ENCODE measurements at regions of chr1 and their contacts with region 1.

Region 1: GRCh38 chr1:207499573-207499972 is 3.6 kb downstream of the CR1 start:
- DNase-seq: peak; percentile 47
- H3K4me3 ChIP-seq: no peak overlapping the region
- H3K27ac ChIP-seq: no peak overlapping the region
- H3K4me1 ChIP-seq: peaks cover 7% of the 10 kb centered on the region
- H3K27me3 ChIP-seq: peaks cover 13% of the 10 kb centered on the region
- CTCF ChIP-seq: peak; percentile 70 to 81

Region 2: GRCh38 chr1:207084701-207085180 is 414.8 kb before region 1 on chr1:
- CTCF ChIA-PET with region 1: no interaction called
- dilution Hi-C with region 1: no loop called
- in situ Hi-C with region 1: loop called in 1 of 2 experiments (anchors 25 kb)
- intact Hi-C with region 1: loop called (anchors 1 kb)
- DNase-seq: peak; percentile 59
- H3K4me3 ChIP-seq: no peak overlapping the region
- H3K27ac ChIP-seq: no peak overlapping the region
- H3K4me1 ChIP-seq: peaks cover 3% of the 10 kb centered on the region
- H3K27me3 ChIP-seq: no peaks in the 10 kb centered on the region
- CTCF ChIP-seq: peak; percentile 56 to 73

Region 3: DNA sequence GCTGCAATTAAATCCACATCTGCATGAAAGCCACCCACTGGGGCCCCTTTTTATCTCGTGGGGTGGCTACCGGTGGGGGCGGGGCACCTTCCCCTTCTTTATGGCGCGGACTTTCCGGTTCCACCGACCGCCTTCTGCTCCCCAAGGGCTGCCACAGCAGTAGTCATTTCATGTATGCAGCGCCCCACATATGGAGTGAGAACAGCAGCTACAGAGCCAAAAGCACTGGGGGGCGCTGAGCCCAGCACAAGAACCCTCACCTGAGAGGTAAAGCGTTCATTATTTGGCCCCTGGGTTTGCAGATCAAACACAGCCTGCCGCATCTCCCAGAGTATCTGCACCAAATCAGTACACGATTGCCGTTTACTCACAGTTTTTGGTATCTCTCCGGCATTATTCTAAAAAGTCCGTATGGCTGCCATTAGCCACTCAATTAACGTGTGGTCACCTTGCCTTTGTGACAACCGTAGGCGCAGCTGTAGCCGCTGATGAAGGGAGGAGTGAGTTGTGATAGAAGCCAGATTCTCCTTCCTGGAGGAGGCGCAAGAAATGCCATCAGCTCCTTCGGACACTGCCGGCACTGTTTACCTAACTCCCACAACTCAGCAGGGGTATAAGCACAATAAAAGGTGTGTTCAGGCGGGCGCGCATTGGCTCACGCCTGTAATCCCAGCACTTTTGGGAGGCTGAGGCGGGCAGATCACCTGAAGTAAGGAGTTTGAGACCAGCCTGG is 75.8 kb before region 1 on chr1:
- CTCF ChIA-PET with region 1: no interaction called
- dilution Hi-C with region 1: no loop called
- in situ Hi-C with region 1: no loop called
- intact Hi-C with region 1: loop called (anchors 5 kb)
- DNase-seq: no peak
- H3K4me3 ChIP-seq: no peak overlapping the region
- H3K27ac ChIP-seq: no peak overlapping the region
- H3K4me1 ChIP-seq: no peaks in the 10 kb centered on the region
- H3K27me3 ChIP-seq: peaks cover 10% of the 10 kb centered on the region
- CTCF ChIP-seq: no peak